OCI-LY7 (cell line): ENCODE measurements at regions of chr3 and their contacts with region 1.

Region 1: GRCh38 chr3:45037734-45038455 is 11.8 kb downstream of the CLEC3B start:
- DNase-seq: peak; percentile 91
- H3K4me3 ChIP-seq: no peak overlapping the region
- H3K27ac ChIP-seq: no peak overlapping the region
- H3K4me1 ChIP-seq: no peaks in the 10 kb centered on the region
- CTCF ChIP-seq: peak; percentile 93

Region 2: GRCh38 chr3:45210308-45211041 is 172.6 kb after region 1 on chr3:
- CTCF ChIA-PET with region 1: no interaction called
- POLR2A ChIA-PET with region 1: no interaction called
- intact Hi-C with region 1: loop called (anchors 1 kb)
- DNase-seq: peak; percentile 21
- H3K4me3 ChIP-seq: no peak overlapping the region
- H3K27ac ChIP-seq: no peak overlapping the region
- H3K4me1 ChIP-seq: no peaks in the 10 kb centered on the region
- CTCF ChIP-seq: peak; percentile 74

Region 3: GRCh38 chr3:45497963-45498362 is 460.1 kb after region 1 on chr3:
- CTCF ChIA-PET with region 1: no interaction called
- POLR2A ChIA-PET with region 1: no interaction called
- intact Hi-C with region 1: loop called (anchors 1 kb)
- DNase-seq: no peak
- H3K4me3 ChIP-seq: no peak overlapping the region
- H3K27ac ChIP-seq: no peak overlapping the region
- H3K4me1 ChIP-seq: no peaks in the 10 kb centered on the region
- CTCF ChIP-seq: no peak

Region 4: DNA sequence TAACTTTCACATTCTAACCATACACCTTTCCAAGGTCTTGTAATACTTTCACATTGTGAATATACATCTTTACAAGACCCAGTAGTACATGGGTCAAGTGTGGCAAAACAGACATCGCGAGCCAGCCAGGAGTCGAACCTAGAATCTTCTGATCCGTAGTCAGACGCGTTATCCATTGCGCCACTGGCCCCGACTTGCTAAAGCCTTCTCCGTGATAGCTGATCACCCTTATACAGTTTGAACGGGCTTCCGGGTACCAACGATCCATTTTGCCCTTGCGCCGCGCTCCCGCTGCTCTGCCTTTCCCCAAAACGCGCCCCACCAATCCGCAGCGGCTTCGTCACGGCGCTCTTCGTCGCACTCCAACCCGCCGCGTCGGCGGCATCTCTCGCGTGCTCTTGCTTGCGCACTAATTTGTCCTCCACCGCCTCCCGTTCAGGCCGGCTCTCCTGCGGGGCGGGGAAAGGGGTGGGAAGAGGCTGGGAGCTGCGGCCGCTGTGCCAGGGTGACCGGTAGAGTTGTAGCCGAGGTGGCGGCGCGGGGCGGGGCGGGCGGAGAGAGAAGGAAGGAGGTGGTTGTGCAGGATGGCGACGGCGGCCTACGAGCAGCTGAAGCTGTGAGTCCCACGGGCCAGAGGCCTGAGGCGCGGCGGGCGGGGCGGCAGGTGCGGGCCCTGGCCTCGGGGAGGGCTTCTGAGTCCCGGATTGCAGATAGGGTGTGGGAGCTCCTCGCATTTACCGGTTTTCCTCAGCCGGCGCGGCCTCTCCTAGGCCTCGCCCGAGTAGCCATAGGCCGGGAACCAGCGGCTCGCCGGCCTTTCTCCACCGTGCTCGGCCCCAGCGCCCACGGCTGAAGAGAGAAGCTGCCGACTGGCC is 651.2 kb after region 1 on chr3 and contains the start of gene SACM1L:
- CTCF ChIA-PET with region 1: no interaction called
- POLR2A ChIA-PET with region 1: no interaction called
- intact Hi-C with region 1: no loop called
- DNase-seq: peak; percentile 99
- H3K4me3 ChIP-seq: peak within 1 kb of the TSS; percentile 91
- H3K27ac ChIP-seq: peak within 1 kb of the TSS; percentile 78
- H3K4me1 ChIP-seq: peaks cover 34% of the 10 kb centered on the region
- CTCF ChIP-seq: no peak
- total RNA-seq, gene SACM1L: 35.5 and 35.9 TPM in 2 replicates